SK-N-SH (cell line): ENCODE measurements at regions of chr17 and their contacts with region 1.

Region 1: DNA sequence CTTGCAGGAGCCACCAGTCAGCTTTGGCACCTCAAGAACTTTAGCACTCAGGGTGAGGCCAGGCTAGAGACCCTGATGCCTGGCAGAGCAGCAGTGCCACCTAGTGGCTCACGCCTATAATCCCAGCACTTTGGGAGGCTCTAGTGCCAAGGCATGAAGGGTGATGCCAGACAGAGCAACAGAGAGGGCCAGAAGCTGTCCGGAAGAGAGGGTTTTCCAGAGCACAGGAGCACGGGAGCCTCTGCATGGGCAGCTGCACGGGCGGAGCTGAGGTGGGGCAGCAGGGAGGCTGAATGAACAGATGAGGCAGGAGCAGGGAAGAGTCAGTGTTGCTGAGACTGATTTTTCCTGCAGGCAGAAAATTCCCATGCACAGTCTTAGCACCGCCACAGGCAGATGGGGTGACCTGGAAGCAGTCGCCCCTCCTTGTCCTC is 38.9 kb downstream of the MYH3 start:
- DNase-seq: peak; percentile 75
- H3K4me3 ChIP-seq: peak overlapping the region in 1 of 2 experiments; percentile 44; a peak in 2 of 4 replicates
- H3K27ac ChIP-seq: no peak overlapping the region
- H3K4me1 ChIP-seq: peaks cover 2 to 11% of the 10 kb centered on the region in 2 experiments; a peak in 3 of 4 replicates
- H3K27me3 ChIP-seq: no peaks in the 10 kb centered on the region
- CTCF ChIP-seq: peak; percentile 95
- EP300 ChIP-seq: no peak
- RAD21 ChIP-seq: peak; percentile 68

Region 2: DNA sequence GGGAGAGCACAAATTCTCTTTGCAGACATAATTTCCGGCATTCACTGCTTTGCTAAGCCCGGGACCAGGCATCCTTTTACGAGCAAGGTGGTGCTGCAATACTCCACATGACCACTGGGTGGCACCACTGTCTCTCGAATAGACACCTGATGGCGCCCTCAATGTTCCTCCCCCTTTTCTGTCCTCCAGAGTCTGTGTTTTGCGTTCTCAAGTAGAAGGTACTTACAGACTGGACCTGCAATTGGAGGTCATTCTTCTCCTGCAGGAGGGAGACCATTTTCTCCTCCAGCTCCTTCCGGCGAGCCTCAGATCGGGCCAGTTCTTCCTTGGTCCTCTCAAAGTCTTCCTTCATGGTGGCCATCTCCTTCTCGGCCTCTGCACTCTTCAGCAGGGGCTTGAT is 290.6 kb before region 1 on chr17:
- CTCF ChIA-PET with region 1: interaction called, 32 read pairs
- POLR2A ChIA-PET with region 1: no interaction called
- DNase-seq: peak; percentile 75
- H3K4me3 ChIP-seq: peak overlapping the region in 1 of 2 experiments; percentile 48; a peak in 1 of 4 replicates
- H3K27ac ChIP-seq: no peak overlapping the region
- H3K4me1 ChIP-seq: no peaks in the 10 kb centered on the region
- H3K27me3 ChIP-seq: no peaks in the 10 kb centered on the region; the same call in 1 of the 2 replicates
- CTCF ChIP-seq: peak; percentile 91
- EP300 ChIP-seq: no peak
- RAD21 ChIP-seq: peak; percentile 78

Region 3: GRCh38 chr17:10435096-10435495 is 183.1 kb before region 1 on chr17:
- CTCF ChIA-PET with region 1: no interaction called
- POLR2A ChIA-PET with region 1: no interaction called
- DNase-seq: no peak
- H3K4me3 ChIP-seq: no peak overlapping the region
- H3K27ac ChIP-seq: no peak overlapping the region
- H3K4me1 ChIP-seq: no peaks in the 10 kb centered on the region
- H3K27me3 ChIP-seq: no peaks in the 10 kb centered on the region; the same call in 1 of the 2 replicates
- CTCF ChIP-seq: no peak
- EP300 ChIP-seq: no peak
- RAD21 ChIP-seq: no peak

Region 4: GRCh38 chr17:10600571-10600970 is 17.6 kb before region 1 on chr17:
- CTCF ChIA-PET with region 1: interaction called, 98 read pairs
- POLR2A ChIA-PET with region 1: no interaction called
- DNase-seq: no peak
- H3K4me3 ChIP-seq: no peak overlapping the region
- H3K27ac ChIP-seq: no peak overlapping the region; a peak in 2 of 4 replicates
- H3K4me1 ChIP-seq: no peaks in the 10 kb centered on the region
- H3K27me3 ChIP-seq: peaks cover 4% of the 10 kb centered on the region; the same call in 1 of the 2 replicates
- CTCF ChIP-seq: no peak
- EP300 ChIP-seq: peak in 1 of 2 experiments; percentile 16; a peak in 1 of 4 replicates
- RAD21 ChIP-seq: no peak

Region 5: GRCh38 chr17:10640475-10640874 is 22.3 kb after region 1 on chr17:
- CTCF ChIA-PET with region 1: interaction called, 155 read pairs
- POLR2A ChIA-PET with region 1: no interaction called
- DNase-seq: no peak
- H3K4me3 ChIP-seq: no peak overlapping the region
- H3K27ac ChIP-seq: no peak overlapping the region
- H3K4me1 ChIP-seq: no peaks in the 10 kb centered on the region
- H3K27me3 ChIP-seq: no peaks in the 10 kb centered on the region
- CTCF ChIP-seq: no peak
- EP300 ChIP-seq: no peak
- RAD21 ChIP-seq: no peak